Activated B cell treated with CpG ODN at 0.5 μM for 24 hours (primary cell): ENCODE measurements at regions of chr6 and their contacts with region 1.

Region 1: GRCh38 chr6:24933868-24934401 is 1.8 kb downstream of the RIPOR2 start:
- DNase-seq: no peak
- ATAC-seq: no peak
- H3K4me3 Mint-ChIP-seq: peak overlapping the region; percentile 91
- H3K27ac Mint-ChIP-seq: peak overlapping the region; percentile 91
- H3K4me1 Mint-ChIP-seq: peaks cover 97% of the 10 kb centered on the region
- H3K27me3 Mint-ChIP-seq: no peaks in the 10 kb centered on the region
- CTCF ChIP-seq: peak; percentile 32

Region 2: DNA sequence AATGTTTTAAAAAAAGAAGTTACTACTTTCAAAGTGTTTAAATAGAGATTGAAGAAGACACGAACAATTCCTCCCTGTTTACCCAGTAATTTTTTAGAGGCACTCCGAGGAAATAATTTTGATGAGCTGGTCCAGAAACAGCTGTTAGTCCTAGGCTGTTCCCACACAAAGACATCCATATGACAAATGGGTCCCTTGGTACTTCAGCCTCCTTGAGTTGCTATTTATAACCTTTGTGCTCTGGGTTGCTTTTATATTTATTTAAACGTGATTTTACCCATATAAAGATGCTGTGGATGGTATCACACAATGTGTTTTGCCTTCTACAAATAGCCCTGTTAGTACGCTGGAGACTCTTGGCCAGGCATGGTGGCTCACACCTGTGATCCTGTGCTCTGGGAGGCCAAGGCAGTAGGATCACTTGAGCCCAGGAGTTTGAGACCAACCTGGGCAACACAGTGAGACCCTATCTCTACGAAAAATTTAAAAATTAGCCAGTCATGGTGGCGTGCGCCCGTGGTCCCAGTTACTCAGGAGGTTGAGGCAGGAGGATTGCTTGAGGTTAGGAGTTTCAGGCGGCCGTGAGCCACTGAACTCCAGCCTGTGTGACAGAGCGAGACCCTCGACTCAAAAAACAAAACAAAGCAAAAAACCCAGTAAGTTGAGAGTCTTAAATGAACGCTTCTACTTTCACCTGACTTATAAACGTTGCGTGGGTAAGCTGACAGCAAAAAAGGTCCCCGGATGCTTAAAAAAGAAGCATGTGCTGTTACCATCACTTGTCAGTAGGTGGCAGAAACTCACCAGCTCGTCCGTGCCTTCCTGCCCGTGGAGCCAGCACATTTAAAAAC is 78.3 kb before region 1 on chr6:
- CTCF ChIA-PET with region 1: interaction called, 9 read pairs
- POLR2A ChIA-PET with region 1: interaction called, 16 read pairs
- intact Hi-C with region 1: loop called (anchors 1 kb)
- DNase-seq: no peak
- ATAC-seq: peak; percentile 66
- H3K4me3 Mint-ChIP-seq: no peak overlapping the region
- H3K27ac Mint-ChIP-seq: peak overlapping the region; percentile 81
- H3K4me1 Mint-ChIP-seq: peaks cover 63% of the 10 kb centered on the region
- H3K27me3 Mint-ChIP-seq: no peaks in the 10 kb centered on the region
- CTCF ChIP-seq: peak; percentile 58

Region 3: DNA sequence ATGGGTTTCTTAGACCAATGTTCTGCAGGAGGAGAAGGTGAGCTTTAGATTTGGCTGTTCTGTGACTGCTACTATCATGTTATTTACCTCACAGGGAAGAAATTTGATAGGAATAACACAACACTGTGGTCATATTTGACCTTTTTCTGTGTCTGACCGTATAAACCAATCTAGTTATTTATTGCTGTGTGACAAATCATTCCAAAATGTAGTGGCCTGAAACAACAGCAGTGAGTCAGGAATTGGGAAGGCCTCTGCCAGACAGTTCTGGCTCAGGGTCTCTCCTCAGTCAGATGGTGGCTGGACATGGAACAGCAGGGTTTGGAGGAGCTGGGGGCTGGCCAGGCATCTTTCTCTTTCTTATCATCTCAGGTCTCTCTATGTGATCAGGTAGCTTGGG is 31.2 kb before region 1 on chr6:
- CTCF ChIA-PET with region 1: interaction called, 7 read pairs
- POLR2A ChIA-PET with region 1: interaction called, 8 read pairs
- intact Hi-C with region 1: loop called (anchors 5 kb)
- DNase-seq: no peak
- ATAC-seq: no peak
- H3K4me3 Mint-ChIP-seq: no peak overlapping the region
- H3K27ac Mint-ChIP-seq: peak overlapping the region; percentile 81
- H3K4me1 Mint-ChIP-seq: peaks cover 96% of the 10 kb centered on the region
- H3K27me3 Mint-ChIP-seq: no peaks in the 10 kb centered on the region
- CTCF ChIP-seq: no peak

Region 4: DNA sequence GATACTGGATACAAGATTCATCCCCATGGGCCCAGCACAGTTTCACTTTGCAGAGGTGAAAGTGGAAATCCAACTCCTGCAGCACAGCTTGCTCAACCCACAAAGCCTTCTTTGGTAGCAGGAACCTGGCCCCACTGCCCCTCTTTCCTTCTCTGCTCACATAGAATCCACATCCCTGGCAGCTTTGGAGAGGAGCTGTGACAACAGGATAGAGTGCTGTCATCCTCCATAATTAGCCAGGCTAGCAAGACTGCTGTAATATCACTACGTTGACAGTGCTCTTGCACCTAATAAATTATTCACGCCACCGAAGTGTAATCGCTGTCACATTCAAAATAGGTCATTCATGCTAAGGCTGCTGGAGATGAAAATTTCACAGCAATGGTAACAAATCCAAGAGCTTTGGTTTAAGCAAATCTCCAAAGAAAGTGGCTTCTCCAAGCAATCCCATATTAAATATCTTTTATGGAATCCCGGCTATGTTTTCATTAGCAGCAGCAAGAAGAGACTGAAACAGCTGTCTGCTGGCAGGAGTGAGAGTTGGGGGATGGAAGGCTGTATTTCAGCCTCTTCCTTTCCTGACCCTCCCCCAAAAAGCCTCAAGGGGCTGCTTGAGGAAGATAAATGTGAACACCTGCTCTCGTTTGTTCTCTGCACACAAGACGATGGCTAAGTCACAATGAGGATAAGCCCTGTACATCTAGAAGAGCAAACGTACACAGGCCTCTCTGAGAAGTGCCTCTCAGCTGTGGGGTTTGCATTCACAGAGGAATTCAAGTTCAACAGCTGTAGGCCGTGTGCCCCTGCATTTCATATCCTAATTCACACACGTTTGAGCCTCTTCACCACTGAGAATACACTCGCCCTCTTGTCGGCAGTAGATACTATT is 14.7 kb before region 1 on chr6:
- CTCF ChIA-PET with region 1: interaction called, 39 read pairs
- POLR2A ChIA-PET with region 1: interaction called, 111 read pairs
- intact Hi-C with region 1: loop called (anchors 1 kb)
- DNase-seq: no peak
- ATAC-seq: peak; percentile 55
- H3K4me3 Mint-ChIP-seq: peak overlapping the region; percentile 61
- H3K27ac Mint-ChIP-seq: peak overlapping the region; percentile 88
- H3K4me1 Mint-ChIP-seq: peaks cover 96% of the 10 kb centered on the region
- H3K27me3 Mint-ChIP-seq: no peaks in the 10 kb centered on the region
- CTCF ChIP-seq: no peak

Region 5: GRCh38 chr6:24974182-24975171 is 40.5 kb after region 1 on chr6:
- CTCF ChIA-PET with region 1: interaction called, 6 read pairs
- POLR2A ChIA-PET with region 1: interaction called, 5 read pairs
- intact Hi-C with region 1: loop called (anchors 5 kb)
- DNase-seq: no peak
- ATAC-seq: peak; percentile 81
- H3K4me3 Mint-ChIP-seq: peak overlapping the region; percentile 64
- H3K27ac Mint-ChIP-seq: peak overlapping the region; percentile 89
- H3K4me1 Mint-ChIP-seq: peaks cover 80% of the 10 kb centered on the region
- H3K27me3 Mint-ChIP-seq: no peaks in the 10 kb centered on the region
- CTCF ChIP-seq: no peak

Region 6: DNA sequence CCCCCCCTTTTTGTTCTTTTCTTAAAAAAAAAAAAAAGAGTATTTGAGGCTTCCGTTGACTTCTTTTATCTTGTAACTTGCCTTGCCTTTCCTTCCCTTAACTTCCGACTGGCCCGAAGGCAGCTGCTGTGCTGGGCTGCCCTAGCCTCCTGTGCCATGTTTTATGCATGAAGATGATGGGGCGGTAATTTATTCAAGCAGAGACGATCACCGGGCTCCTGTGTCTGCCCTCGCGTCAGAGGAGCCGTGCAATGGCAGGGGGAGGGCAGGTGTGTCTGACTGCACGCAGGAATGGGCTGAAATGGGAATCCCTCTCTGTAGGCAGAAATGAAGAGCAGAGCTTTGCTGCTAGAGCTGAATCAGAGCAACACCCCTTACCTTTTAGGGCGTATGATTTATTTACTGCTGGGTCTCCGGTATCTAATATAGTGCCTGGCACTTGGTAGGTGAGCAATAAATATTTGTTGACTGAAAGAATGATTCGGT is 108.1 kb after region 1 on chr6:
- CTCF ChIA-PET with region 1: interaction called, 4 read pairs
- POLR2A ChIA-PET with region 1: interaction called, 12 read pairs
- intact Hi-C with region 1: no loop called
- DNase-seq: peak; percentile 53
- ATAC-seq: peak; percentile 65
- H3K4me3 Mint-ChIP-seq: peak overlapping the region; percentile 99
- H3K27ac Mint-ChIP-seq: peak overlapping the region; percentile 96
- H3K4me1 Mint-ChIP-seq: peaks cover 87% of the 10 kb centered on the region
- H3K27me3 Mint-ChIP-seq: no peaks in the 10 kb centered on the region
- CTCF ChIP-seq: no peak

Region 7: DNA sequence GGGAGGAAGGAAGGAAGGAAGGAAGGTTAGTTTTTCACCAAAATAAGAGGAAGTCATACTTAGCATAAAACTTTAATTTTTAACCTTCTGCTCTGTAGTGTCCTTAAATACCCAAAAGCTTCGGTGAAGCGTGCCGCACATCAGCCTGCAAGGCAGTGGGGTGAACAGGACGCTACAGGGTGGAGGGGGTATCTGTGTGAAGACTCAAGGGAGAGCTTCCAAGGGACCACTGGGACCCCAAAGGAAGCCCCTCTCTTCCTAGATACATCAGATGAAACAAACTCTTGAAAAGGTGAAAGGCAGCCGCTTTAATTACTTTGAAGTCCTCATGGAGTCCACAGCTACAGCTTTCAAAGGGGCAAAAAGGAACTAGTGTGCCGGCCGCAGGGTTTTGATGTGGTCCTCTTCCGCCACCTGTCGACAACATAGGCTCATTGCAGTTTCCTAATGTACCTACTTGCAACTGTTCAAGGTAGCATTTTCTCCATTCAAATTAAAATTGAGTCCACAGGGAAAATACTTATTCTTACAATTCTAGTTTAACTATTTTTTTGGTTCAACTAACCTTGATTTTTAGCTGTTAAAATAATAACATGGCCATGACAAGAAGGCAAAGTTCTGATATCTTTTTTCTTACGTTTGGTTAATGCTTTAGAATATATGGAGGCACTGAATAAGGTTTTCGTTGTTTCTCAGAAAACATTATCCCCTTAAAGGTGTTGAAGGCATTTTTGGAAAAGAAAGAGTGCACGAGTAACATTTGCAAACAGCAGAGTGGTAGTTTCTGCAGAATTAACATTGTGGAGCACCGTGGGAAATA is 136.8 kb after region 1 on chr6:
- CTCF ChIA-PET with region 1: interaction called, 7 read pairs
- POLR2A ChIA-PET with region 1: interaction called, 4 read pairs
- intact Hi-C with region 1: loop called (anchors 2 kb)
- DNase-seq: peak; percentile 63
- ATAC-seq: peak; percentile 94
- H3K4me3 Mint-ChIP-seq: peak overlapping the region; percentile 84
- H3K27ac Mint-ChIP-seq: peak overlapping the region; percentile 97
- H3K4me1 Mint-ChIP-seq: peaks cover 6% of the 10 kb centered on the region
- H3K27me3 Mint-ChIP-seq: no peaks in the 10 kb centered on the region
- CTCF ChIP-seq: peak; percentile 57